CD4-positive, alpha-beta T cell (primary cell): ENCODE measurements at regions of chr10 and their contacts with region 1.

Region 1: DNA sequence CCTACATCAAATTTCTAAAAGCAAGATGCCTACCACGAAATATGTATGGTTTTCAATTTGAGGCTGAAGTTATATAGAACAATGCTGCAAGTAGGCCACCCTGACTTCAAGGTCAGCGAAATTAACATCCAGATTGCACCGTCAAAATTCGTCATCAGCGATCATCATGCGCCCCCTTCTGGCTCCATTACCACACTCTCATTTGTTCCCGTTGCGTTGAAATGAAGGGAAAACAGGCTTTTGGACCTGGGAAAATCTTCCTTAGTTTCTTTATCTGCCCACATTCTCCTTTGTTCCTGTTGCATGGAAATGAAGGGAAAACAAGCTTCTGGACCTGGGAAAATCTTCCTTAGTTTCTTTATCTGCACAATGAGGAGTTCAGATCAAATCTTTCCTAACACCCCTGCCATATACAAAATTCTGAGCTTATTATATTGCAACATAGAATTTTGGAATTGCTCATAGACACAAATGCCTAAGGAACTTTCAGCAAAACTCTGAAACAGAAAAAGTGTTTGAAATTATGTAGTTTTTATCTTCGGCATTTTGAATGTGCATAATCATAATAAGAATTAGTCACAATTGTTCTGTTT is 98.2 kb upstream of the PRKCQ start:
- DNase-seq: peak; percentile 36 to 83 (median 52)
- ATAC-seq: peak; percentile 51
- H3K4me3 ChIP-seq: no peak overlapping the region
- H3K4me3 Mint-ChIP-seq: no peak overlapping the region
- H3K27ac ChIP-seq: no peak overlapping the region
- H3K27ac Mint-ChIP-seq: no peak overlapping the region
- H3K4me1 ChIP-seq: no peaks in the 10 kb centered on the region
- H3K4me1 Mint-ChIP-seq: peaks cover 5% of the 10 kb centered on the region
- H3K27me3 ChIP-seq: peaks cover 0 to 3% of the 10 kb centered on the region in 2 experiments
- H3K27me3 Mint-ChIP-seq: no peaks in the 10 kb centered on the region
- CTCF ChIP-seq: peak; percentile 89

Region 2: DNA sequence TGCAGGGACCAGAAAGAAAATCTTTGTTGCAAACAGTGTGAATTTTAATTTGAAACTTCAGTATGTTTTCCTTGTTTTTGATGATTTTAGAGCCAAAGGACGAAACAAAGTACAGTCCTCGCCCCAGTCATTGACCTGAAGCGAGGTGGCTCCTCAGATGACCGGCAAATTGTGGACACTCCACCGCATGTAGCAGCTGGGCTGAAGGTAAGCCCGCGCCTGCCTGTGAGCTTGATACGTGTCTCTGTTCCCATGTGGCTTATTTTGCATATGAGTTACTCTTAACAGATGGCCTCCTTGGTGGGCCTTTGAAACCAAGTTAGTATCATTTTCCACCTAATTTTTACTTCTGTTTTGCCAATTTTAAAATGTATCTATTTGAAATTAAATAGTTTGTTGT is 577.1 kb before region 1 on chr10:
- CTCF ChIA-PET with region 1: no interaction called
- POLR2A ChIA-PET with region 1: no interaction called
- intact Hi-C with region 1: loop called in 1 of 2 experiments (anchors 5 kb)
- DNase-seq: no peak
- ATAC-seq: no peak
- H3K4me3 ChIP-seq: no peak overlapping the region
- H3K4me3 Mint-ChIP-seq: no peak overlapping the region
- H3K27ac ChIP-seq: no peak overlapping the region
- H3K27ac Mint-ChIP-seq: no peak overlapping the region
- H3K4me1 ChIP-seq: peaks cover under 1% of the 10 kb centered on the region
- H3K4me1 Mint-ChIP-seq: peaks cover 17% of the 10 kb centered on the region
- H3K27me3 ChIP-seq: no peaks in the 10 kb centered on the region
- H3K27me3 Mint-ChIP-seq: no peaks in the 10 kb centered on the region
- CTCF ChIP-seq: no peak

Region 3: GRCh38 chr10:6108603-6109443 is 569.5 kb before region 1 on chr10:
- CTCF ChIA-PET with region 1: no interaction called
- POLR2A ChIA-PET with region 1: no interaction called
- intact Hi-C with region 1: loop called (anchors 1 to 5 kb)
- DNase-seq: peak in 6 of 14 experiments; percentile 17 to 83 (median 59)
- ATAC-seq: peak; percentile 86
- H3K4me3 ChIP-seq: peak overlapping the region; percentile 9
- H3K4me3 Mint-ChIP-seq: peak overlapping the region; percentile 57
- H3K27ac ChIP-seq: no peak overlapping the region
- H3K27ac Mint-ChIP-seq: peak overlapping the region; percentile 43
- H3K4me1 ChIP-seq: peaks cover 19% of the 10 kb centered on the region
- H3K4me1 Mint-ChIP-seq: peaks cover 35% of the 10 kb centered on the region
- H3K27me3 ChIP-seq: no peaks in the 10 kb centered on the region
- H3K27me3 Mint-ChIP-seq: no peaks in the 10 kb centered on the region
- CTCF ChIP-seq: peak; percentile 91

Region 4: GRCh38 chr10:6416892-6417512 is 261.3 kb before region 1 on chr10:
- CTCF ChIA-PET with region 1: interaction called, 5 read pairs
- POLR2A ChIA-PET with region 1: no interaction called
- intact Hi-C with region 1: loop called (anchors 1 kb)
- DNase-seq: peak in 4 of 14 experiments; percentile 22 to 76 (median 74)
- ATAC-seq: peak; percentile 76
- H3K4me3 ChIP-seq: no peak overlapping the region
- H3K4me3 Mint-ChIP-seq: no peak overlapping the region
- H3K27ac ChIP-seq: no peak overlapping the region
- H3K27ac Mint-ChIP-seq: no peak overlapping the region
- H3K4me1 ChIP-seq: no peaks in the 10 kb centered on the region
- H3K4me1 Mint-ChIP-seq: peaks cover 5% of the 10 kb centered on the region
- H3K27me3 ChIP-seq: no peaks in the 10 kb centered on the region
- H3K27me3 Mint-ChIP-seq: no peaks in the 10 kb centered on the region
- CTCF ChIP-seq: peak; percentile 86

Region 5: DNA sequence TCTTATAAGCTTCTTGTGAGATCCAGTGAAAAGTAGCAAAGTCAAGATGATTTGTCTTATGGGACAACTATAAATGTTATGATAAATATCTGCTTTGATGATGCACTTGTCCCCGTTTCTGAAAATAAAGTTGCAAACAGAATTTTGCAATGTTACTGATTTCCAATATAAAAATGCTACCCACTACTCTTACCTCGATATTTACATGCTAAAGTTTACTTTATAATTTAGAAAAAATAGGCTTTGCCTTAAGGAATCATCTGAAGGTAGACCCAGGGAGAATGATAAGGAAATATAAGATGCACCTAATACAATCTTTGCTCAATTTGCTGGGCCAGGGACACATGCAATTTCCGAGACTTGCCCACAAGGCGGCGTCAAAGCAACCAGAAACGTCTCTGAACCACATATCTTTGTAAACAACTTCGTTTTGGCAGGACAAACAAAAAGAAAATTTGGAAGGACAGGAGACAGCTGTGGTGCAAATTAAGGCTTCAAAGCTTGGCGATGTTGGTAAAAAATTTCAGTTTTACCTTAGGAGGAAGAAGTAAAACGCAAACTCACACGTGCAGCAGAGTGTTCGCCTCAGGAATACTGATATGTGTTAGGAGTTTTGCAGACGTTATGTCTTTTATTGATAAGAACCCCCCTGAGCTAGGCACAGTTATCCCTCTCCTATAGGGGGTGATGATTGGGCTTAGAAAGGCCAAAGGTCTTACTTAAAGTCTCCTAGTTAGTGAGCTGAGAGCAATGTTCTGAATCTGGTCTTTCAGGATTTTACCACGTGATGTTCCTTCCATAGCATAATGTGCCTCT is 232.6 kb before region 1 on chr10:
- CTCF ChIA-PET with region 1: interaction called, 3 read pairs
- POLR2A ChIA-PET with region 1: no interaction called
- intact Hi-C with region 1: loop called (anchors 1 kb)
- DNase-seq: peak; percentile 27 to 79 (median 61)
- ATAC-seq: peak; percentile 64
- H3K4me3 ChIP-seq: no peak overlapping the region
- H3K4me3 Mint-ChIP-seq: no peak overlapping the region
- H3K27ac ChIP-seq: no peak overlapping the region
- H3K27ac Mint-ChIP-seq: peak overlapping the region; percentile 68
- H3K4me1 ChIP-seq: peaks cover 11% of the 10 kb centered on the region
- H3K4me1 Mint-ChIP-seq: peaks cover 30% of the 10 kb centered on the region
- H3K27me3 ChIP-seq: no peaks in the 10 kb centered on the region
- H3K27me3 Mint-ChIP-seq: no peaks in the 10 kb centered on the region
- CTCF ChIP-seq: peak; percentile 77

Region 6: GRCh38 chr10:7417103-7417623 is 738.9 kb after region 1 on chr10:
- CTCF ChIA-PET with region 1: no interaction called
- POLR2A ChIA-PET with region 1: no interaction called
- intact Hi-C with region 1: loop called in 1 of 2 experiments (anchors 5 kb)
- DNase-seq: peak in 3 of 14 experiments; percentile 65 to 78 (median 74)
- ATAC-seq: peak; percentile 51
- H3K4me3 ChIP-seq: no peak overlapping the region
- H3K4me3 Mint-ChIP-seq: peak overlapping the region; percentile 54
- H3K27ac ChIP-seq: no peak overlapping the region
- H3K27ac Mint-ChIP-seq: peak overlapping the region; percentile 57
- H3K4me1 ChIP-seq: peaks cover 9% of the 10 kb centered on the region
- H3K4me1 Mint-ChIP-seq: peaks cover 18% of the 10 kb centered on the region
- H3K27me3 ChIP-seq: peaks cover 0 to 5% of the 10 kb centered on the region in 2 experiments
- H3K27me3 Mint-ChIP-seq: no peaks in the 10 kb centered on the region
- CTCF ChIP-seq: peak; percentile 77